Posterior vena cava (tissue), 2 donors: ENCODE measurements at regions of chr4 and their contacts with region 1.

Region 1: DNA sequence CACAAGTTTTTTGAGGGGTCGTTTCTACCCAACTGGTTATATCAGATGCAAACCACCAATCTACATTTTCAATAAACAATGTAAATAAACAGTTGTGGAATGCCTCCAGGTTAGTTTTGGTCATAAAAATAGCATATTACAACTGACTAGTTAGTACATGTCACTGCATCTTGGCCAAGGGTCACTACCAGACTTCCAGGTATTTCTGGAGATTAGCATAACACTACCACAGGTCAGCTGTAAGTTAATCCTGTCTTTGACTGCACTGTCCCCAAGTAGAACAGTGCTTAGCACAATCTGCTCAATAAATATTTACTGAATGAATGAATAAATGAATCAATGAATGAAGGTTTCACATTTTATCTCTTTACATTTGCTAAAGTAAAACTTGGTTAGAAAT is 64.4 kb downstream of the TBC1D19 start:
- DNase-seq: no peak

Region 2: DNA sequence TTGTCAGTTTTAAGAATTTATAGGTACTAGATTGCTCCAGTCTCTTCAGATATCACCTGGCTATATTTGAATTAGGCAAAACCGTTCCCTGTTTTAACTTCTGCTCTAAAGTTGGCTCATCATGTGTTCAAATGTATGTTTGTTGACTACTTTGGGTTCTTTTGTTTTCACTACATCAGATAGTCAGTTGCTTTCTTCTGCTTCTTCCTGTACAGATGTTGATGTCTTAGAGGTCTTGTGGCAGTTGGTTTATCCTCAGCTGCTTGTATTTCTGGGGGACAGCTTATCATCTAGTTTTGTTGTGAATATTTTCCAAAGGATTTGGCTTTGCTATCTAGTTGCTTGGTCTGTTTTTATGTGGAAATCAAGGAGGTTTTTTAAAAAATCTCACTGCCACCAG is 36.4 kb before region 1 on chr4:
- intact Hi-C with region 1: loop called in 1 of 2 experiments (anchors 2 kb)
- DNase-seq: no peak

Region 3: GRCh38 chr4:26713563-26714151 is 65.4 kb after region 1 on chr4:
- intact Hi-C with region 1: no loop called
- DNase-seq: no peak